ENCODE measurements at regions of chr14 and their contacts with region 1.

Region 1: DNA sequence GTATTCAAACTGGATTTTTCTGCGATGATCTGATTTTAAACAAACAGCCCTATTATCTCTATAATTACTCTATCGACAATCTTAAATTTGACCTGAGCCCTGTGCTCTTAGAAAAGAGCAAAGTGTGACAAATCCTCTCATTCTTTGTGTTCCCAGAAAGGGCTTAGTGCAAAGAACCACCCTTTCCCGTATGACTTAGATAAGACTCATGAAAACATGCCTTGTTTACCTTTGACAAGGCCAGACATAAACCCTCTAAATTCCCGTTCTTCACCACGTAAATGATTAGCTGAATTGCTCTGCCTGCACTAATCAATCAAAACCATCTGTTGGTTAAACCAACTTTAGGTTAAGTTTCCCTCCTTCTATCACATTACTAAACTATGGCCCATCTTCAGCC is 285.7 kb upstream of the SEL1L start:
- DNase-seq: no peak
- H3K4me3 ChIP-seq: no peak overlapping the region
- H3K27ac ChIP-seq: no peak overlapping the region
- H3K4me1 ChIP-seq: no peaks in the 10 kb centered on the region
- H3K27me3 ChIP-seq: no peaks in the 10 kb centered on the region
- CTCF ChIP-seq: no peak

Region 2: DNA sequence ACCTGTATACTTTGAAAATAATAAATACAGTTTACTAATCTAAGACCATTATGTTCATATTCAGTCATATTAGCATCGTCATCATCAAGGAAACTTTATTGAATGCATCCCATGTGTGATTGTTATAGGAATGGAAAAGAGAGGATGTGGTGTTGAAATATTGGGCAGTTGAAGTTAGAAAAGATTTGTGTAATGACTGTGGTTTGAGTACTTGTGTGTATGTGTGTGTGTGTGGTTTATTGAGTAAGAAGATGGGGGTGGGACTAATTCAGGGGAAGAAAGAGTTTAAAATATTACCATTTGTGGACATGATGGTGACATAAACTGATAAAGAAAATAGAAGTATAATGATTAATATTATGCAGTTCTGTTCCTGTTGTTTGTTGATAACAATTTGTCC is 47.0 kb before region 1 on chr14:
- CTCF ChIA-PET with region 1: no interaction called
- dilution Hi-C with region 1: loop called (anchors 5 kb)
- in situ Hi-C with region 1: no loop called
- intact Hi-C with region 1: no loop called
- DNase-seq: no peak
- H3K4me3 ChIP-seq: no peak overlapping the region
- H3K27ac ChIP-seq: no peak overlapping the region
- H3K4me1 ChIP-seq: no peaks in the 10 kb centered on the region
- H3K27me3 ChIP-seq: no peaks in the 10 kb centered on the region
- CTCF ChIP-seq: no peak

Region 3: DNA sequence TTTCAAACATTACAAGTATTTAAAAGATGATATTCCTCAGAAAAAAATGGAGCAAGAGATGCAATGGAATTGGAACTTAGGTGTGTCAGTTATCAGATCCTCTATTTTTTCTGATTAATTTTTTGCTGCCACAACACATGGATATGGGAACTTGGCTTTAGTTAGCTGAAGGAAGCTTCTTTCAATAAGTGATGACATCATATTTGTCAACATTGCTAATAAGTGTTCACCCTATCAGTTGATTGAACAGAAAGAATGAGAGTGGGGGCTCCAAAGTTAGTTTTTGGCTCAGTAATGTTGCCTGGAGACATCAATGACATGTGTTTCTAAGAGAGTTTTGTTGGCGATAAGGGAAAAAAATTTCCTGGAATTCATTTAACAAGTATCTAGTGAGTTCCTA is 87.9 kb after region 1 on chr14:
- CTCF ChIA-PET with region 1: no interaction called
- dilution Hi-C with region 1: no loop called
- in situ Hi-C with region 1: no loop called
- intact Hi-C with region 1: no loop called
- DNase-seq: no peak
- H3K4me3 ChIP-seq: no peak overlapping the region
- H3K27ac ChIP-seq: no peak overlapping the region
- H3K4me1 ChIP-seq: no peaks in the 10 kb centered on the region
- H3K27me3 ChIP-seq: no peaks in the 10 kb centered on the region
- CTCF ChIP-seq: no peak